Mammary epithelial cell (primary cell): ENCODE measurements at regions of chr19 and their contacts with region 1.

Region 1: DNA sequence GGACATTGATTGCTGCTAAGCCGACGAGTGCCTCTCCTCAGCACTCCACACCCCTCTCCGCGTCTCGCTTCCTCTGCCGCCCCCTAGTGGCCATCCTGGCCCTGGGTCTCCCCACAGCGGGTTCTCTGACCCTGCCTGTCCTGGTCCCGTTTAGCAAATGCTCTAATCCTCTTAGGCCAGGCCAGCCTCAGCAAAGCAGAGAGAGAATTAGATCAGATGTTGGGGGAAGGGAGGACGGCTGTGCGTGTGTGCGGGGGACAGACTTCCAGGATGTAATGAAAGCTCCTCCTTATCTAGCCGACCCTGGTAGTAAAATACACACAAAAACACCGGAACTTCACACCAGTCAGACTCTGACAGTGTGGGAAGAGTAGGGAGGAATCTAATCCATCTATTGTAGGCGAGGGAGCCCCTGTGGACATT is 4.5 kb downstream of the TPRX2 start:
- DNase-seq: peak; percentile 45
- H3K4me3 ChIP-seq: no peak overlapping the region
- H3K27ac ChIP-seq: no peak overlapping the region
- H3K4me1 ChIP-seq: no peaks in the 10 kb centered on the region
- H3K27me3 ChIP-seq: no peaks in the 10 kb centered on the region
- CTCF ChIP-seq: peak; percentile 87 to 95

Region 2: DNA sequence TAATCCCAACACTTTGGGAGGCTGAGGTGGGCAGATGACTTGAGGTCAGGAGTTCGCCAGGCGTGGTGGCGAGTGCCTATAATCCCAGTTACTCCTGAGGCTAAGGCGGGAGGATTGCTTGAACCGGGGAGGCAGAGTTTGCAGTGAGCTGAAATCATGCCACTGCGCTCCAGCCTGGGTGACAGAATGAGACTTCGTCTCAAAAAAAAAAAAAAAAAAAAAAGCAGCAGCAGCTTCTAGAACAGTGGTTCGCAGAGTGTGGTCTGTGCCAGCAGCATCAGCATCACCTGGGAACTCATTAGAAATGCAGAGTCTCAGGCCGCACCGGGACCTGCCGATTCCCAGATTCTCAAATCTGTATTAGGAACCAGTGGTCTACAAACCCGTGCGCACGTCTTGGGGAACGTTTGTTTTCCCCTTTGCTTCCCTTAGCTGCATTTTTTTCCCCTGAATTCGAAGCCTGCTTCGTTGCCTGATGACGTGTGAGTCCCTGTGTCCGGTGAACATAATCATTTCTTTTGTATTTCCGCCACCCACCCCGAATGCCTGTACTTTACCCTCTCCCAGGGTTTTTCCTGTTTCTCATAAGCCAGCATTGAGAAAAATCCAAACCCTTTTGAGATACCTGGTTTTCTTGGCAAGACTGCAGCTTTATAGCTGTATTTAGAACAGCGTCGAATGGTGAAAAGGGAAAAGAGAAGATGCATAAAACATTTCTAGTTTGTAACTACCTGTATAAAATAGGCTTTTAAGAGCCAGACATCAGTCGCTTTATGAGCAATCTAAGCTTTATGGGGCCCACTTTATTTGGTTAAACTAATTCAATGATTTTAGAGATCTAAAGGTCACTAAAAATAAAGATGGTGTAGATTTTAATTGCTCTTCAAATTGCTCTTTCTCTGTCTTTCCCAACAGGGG is 204.8 kb before region 1 on chr19:
- CTCF ChIA-PET with region 1: no interaction called
- dilution Hi-C with region 1: no loop called
- in situ Hi-C with region 1: no loop called
- intact Hi-C with region 1: no loop called
- DNase-seq: no peak
- H3K4me3 ChIP-seq: no peak overlapping the region
- H3K27ac ChIP-seq: no peak overlapping the region
- H3K4me1 ChIP-seq: peaks cover 17% of the 10 kb centered on the region
- H3K27me3 ChIP-seq: no peaks in the 10 kb centered on the region
- CTCF ChIP-seq: no peak

Region 3: DNA sequence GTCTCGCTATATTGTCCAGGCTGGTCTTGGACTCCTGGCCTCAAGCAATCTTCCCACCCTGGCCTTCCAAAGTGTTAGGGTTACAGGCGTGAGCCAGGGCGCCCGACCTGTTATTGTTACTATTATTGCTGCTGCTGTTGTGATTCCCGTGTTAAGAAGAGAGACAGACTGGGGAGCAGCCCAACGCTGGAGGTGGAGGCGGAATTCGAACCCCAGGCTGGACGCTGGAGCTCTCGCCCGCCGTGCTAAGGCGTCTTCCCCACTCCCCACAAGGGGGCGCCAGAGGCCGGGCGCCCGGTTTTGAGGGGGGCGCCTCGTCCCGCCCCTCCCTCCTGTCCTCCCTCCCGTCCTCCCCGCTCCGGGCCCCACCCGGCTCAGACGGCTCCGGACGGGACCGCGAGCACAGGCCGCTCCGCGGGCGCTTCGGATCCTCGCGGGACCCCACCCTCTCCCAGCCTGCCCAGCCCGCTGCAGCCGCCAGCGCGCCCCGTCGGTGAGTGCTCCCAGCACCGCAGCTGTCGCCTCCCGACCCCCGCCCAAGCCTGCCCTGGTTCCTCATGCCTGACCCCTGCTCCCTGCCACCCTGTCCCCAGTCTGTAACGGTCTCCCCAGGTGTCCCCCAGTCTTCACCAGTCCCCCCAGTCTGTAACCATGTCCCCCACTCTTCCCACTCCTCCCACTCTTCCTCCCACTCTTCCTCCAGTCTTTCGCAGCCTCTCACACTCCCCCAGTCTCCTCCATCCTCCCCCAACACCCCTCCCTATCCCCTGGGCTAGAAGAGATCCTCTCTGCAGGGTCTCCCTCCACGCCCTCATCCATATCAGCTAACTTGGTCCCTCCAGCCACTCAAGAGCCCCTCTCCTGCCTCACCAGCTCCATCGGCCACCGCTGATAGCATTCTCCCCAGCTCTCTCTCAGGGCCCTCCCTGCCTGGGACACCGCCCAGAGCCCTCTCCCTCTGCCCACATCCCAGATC is 150.2 kb before region 1 on chr19 and contains the start of gene EHD2:
- CTCF ChIA-PET with region 1: no interaction called
- dilution Hi-C with region 1: no loop called
- in situ Hi-C with region 1: no loop called
- intact Hi-C with region 1: loop called (anchors 5 kb)
- DNase-seq: peak; percentile 68
- H3K4me3 ChIP-seq: peak within 1 kb of the TSS; percentile 84 to 97 (median 84)
- H3K27ac ChIP-seq: peak within 1 kb of the TSS; percentile 58
- H3K4me1 ChIP-seq: peaks cover 17% of the 10 kb centered on the region
- H3K27me3 ChIP-seq: no peaks in the 10 kb centered on the region
- CTCF ChIP-seq: peak; percentile 62 to 96
- total RNA-seq, gene EHD2: 111 to 178 TPM

Region 4: GRCh38 chr19:47765523-47766358 is 97.8 kb before region 1 on chr19:
- CTCF ChIA-PET with region 1: no interaction called
- dilution Hi-C with region 1: no loop called
- in situ Hi-C with region 1: no loop called
- intact Hi-C with region 1: loop called (anchors 1 kb)
- DNase-seq: peak; percentile 39
- H3K4me3 ChIP-seq: no peak overlapping the region
- H3K27ac ChIP-seq: no peak overlapping the region
- H3K4me1 ChIP-seq: no peaks in the 10 kb centered on the region
- H3K27me3 ChIP-seq: no peaks in the 10 kb centered on the region
- CTCF ChIP-seq: peak; percentile 80 to 86

Region 5: DNA sequence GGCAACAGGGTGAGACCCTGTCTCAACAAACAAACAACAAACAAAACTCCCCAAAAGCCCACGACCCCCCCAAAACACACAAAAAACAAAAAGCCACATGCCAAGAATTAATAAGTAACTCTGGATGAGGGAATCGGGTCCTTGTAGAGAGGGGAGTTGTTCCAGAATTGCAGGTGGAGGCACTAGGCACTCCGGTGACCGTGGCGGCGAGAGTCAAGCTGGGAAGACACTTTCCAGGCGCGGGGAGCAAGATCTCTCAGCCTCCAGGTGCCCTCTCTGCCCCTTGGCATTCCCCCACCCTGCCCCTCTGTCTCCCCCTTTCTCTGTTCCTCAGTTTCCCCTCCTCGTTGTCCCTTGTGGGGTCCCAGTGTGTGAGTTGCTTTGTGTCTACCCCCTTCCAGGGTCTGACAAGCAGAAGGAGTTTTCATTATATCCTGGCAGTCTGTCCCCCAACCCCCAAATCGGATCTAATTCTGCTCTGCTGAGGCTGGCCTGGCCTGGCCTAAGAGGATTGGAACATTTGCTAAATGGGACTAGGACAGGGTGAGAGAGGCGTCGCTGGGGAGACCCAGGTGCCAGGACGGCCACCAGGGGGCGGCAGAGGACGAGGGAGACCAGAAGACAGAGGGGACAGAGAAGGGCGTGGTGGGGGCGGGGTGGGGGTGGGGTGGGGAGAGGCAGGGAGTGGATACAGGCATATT is 50.1 kb before region 1 on chr19:
- CTCF ChIA-PET with region 1: no interaction called
- dilution Hi-C with region 1: no loop called
- in situ Hi-C with region 1: no loop called
- intact Hi-C with region 1: loop called (anchors 1 kb)
- DNase-seq: peak; percentile 32
- H3K4me3 ChIP-seq: no peak overlapping the region
- H3K27ac ChIP-seq: no peak overlapping the region
- H3K4me1 ChIP-seq: no peaks in the 10 kb centered on the region
- H3K27me3 ChIP-seq: no peaks in the 10 kb centered on the region
- CTCF ChIP-seq: peak; percentile 46 to 69

Region 6: DNA sequence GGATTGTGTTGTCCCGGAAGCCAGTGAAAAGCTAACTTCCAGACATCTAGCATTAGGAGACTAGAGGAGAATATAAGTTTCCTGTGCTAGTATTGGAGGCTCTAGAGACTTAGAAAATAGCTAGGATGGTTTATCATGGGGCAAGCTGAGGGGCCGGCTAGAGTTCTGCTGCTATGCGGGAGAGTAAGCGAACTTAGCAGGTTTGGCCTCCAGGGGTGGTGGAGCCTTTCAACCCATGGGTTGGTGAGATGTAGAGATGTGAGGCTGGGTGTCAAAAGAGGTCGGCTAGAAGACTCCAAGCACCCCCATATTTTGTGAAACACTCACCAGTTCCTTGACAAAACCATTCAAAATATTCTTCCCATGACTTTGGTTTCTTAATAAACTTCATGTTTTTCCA is 18.2 kb after region 1 on chr19:
- CTCF ChIA-PET with region 1: interaction called, 13 read pairs
- dilution Hi-C with region 1: no loop called
- in situ Hi-C with region 1: no loop called
- intact Hi-C with region 1: no loop called
- DNase-seq: no peak
- H3K4me3 ChIP-seq: no peak overlapping the region
- H3K27ac ChIP-seq: no peak overlapping the region
- H3K4me1 ChIP-seq: no peaks in the 10 kb centered on the region
- H3K27me3 ChIP-seq: no peaks in the 10 kb centered on the region
- CTCF ChIP-seq: no peak